Activated naive CD4-positive, alpha-beta T cell treated with anti-CD3 and anti-CD28 coated beads for 36 hours (primary cell): ENCODE measurements at regions of chr6 and their contacts with region 1.

Region 1: GRCh38 chr6:73675466-73676098 is 20.4 kb upstream of the CD109 start:
- DNase-seq: peak; percentile 87
- H3K4me3 Mint-ChIP-seq: no peak overlapping the region
- H3K27ac Mint-ChIP-seq: no peak overlapping the region
- H3K4me1 Mint-ChIP-seq: no peaks in the 10 kb centered on the region
- H3K27me3 Mint-ChIP-seq: peaks cover 8% of the 10 kb centered on the region

Region 2: DNA sequence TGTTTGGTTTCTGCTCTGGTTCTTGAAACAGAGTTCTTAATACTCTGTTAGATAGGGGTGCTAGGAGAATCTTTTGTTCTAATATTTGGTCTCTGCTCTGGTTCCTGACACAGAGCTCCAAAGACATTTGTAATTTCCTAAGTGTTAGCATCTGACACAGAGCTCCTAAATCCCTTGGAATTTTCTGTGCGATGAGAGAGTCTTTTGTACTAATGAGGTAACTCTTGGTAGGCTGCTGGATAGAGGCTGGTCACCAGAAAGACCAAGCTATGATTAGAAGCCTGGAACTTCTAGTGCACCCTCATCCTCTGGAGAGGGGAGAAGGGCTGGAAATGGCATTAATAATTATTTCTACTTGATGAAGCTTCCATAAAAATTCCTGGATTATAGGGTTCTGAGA is 12.8 kb after region 1 on chr6:
- CTCF ChIA-PET with region 1: interaction called, 13 read pairs
- intact Hi-C with region 1: no loop called
- DNase-seq: no peak
- H3K4me3 Mint-ChIP-seq: no peak overlapping the region
- H3K27ac Mint-ChIP-seq: no peak overlapping the region
- H3K4me1 Mint-ChIP-seq: peaks cover 9% of the 10 kb centered on the region
- H3K27me3 Mint-ChIP-seq: peaks cover 8% of the 10 kb centered on the region